ENCODE measurements at regions of chr1 and their contacts with region 1.

Region 1: DNA sequence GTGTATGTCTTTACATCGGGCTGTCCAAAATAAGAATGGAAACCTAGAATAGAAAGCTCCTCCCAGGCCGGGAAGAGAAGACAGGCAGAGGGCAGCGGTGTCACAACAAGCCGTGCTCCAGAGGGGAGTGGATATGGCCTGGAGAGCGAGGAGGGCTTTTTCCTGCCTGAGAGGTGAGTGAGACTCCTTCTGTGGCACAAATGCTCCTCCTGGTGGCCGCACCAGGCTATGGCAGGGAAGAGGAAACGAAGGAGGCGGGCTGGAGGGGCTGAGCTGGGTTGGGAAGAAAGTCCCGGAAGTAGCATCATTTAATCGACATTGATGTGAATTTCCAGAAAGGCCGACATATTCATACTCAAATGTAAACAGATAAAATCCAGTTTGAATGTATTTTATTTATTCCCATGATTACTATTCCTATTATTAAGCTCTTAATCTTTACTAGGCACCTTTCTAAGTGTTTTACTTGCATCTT is 54.7 kb downstream of the MEF2D start:
- DNase-seq: no peak
- ATAC-seq: peak; percentile 95
- H3K4me3 ChIP-seq: no peak overlapping the region
- H3K27ac ChIP-seq: no peak overlapping the region
- H3K4me1 ChIP-seq: no peaks in the 10 kb centered on the region
- H3K27me3 ChIP-seq: peaks cover 7 to 14% of the 10 kb centered on the region in 2 experiments
- CTCF ChIP-seq: peak; percentile 97 to 98 (median 98)
- EP300 ChIP-seq: no peak
- POLR2A ChIP-seq: no peak
- RAD21 ChIP-seq: peak; percentile 99

Region 2: GRCh38 chr1:155744711-155745283 is 701.0 kb before region 1 on chr1:
- CTCF ChIA-PET with region 1: no interaction called
- POLR2A ChIA-PET with region 1: no interaction called
- RAD21 ChIA-PET with region 1: no interaction called
- SMC1A ChIA-PET with region 1: no interaction called
- in situ Hi-C with region 1: no loop called
- intact Hi-C with region 1: no loop called
- DNase-seq: no peak
- ATAC-seq: no peak
- H3K4me3 ChIP-seq: peak overlapping the region; percentile 56
- H3K27ac ChIP-seq: peak overlapping the region; percentile 64
- H3K4me1 ChIP-seq: peaks cover 4% of the 10 kb centered on the region
- H3K27me3 ChIP-seq: no peaks in the 10 kb centered on the region
- CTCF ChIP-seq: no peak
- EP300 ChIP-seq: no peak
- POLR2A ChIP-seq: no peak
- RAD21 ChIP-seq: no peak

Region 3: DNA sequence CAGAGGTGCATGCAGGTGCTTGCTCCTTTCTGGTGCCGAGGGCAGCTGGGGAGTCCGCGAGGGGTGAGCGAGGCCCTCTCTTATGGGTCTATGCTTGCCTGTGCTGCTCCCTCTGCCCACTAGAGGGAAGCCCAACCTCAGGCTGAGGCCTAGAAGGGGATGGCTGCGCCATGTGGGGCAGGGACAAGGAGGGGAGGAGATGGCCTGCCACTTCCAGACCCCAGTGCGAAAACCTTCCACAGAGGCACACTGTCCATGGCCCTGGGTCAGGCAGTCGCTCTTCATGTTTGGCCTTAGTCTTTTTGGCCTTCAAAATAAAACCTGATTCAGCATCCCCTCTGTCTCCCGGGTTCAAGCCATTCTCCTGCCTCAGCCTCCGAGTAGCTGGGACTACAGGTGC is 62.8 kb before region 1 on chr1:
- CTCF ChIA-PET with region 1: interaction called, 468 read pairs
- POLR2A ChIA-PET with region 1: interaction called, 8 read pairs
- RAD21 ChIA-PET with region 1: interaction called, 162 read pairs
- SMC1A ChIA-PET with region 1: interaction called, 149 read pairs
- in situ Hi-C with region 1: loop called (anchors 5 kb)
- intact Hi-C with region 1: loop called (anchors 1 kb)
- DNase-seq: no peak
- ATAC-seq: peak; percentile 98
- H3K4me3 ChIP-seq: no peak overlapping the region
- H3K27ac ChIP-seq: no peak overlapping the region
- H3K4me1 ChIP-seq: no peaks in the 10 kb centered on the region
- H3K27me3 ChIP-seq: peaks cover 2 to 5% of the 10 kb centered on the region in 2 experiments
- CTCF ChIP-seq: peak; percentile 92 to 98 (median 93)
- EP300 ChIP-seq: no peak
- POLR2A ChIP-seq: no peak
- RAD21 ChIP-seq: peak; percentile 91

Region 4: DNA sequence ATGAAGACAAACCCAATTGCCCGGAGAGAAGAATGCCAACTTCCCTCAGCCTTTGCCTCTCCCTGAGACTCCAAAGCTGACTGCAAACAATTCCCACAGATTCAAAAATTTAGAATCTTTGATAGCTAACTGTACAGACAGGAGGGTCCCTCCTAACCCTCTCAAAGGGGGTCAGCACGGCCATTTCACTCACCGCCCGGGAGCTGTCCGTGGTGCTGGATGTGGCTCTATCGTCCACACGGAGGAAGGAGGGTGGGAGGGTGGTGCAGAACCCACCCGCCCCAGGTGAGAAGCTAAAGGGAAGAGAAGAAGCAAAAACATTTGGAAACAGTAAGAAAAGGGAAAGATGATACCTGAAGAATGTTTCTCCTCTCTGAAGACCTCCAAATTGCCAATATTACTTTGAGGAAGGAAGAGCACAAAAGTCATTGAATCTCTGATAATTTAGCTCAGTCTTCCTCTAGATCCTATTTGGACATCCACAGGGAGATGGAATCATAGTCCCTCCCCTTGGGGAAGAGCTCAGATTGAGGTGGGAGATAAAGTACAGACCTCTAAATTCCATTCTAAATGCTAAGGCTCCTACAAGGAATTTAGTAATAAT is 31.3 kb before region 1 on chr1:
- CTCF ChIA-PET with region 1: interaction called, 26 read pairs
- POLR2A ChIA-PET with region 1: no interaction called
- RAD21 ChIA-PET with region 1: interaction called, 13 read pairs
- SMC1A ChIA-PET with region 1: interaction called, 16 read pairs
- in situ Hi-C with region 1: no loop called
- intact Hi-C with region 1: no loop called
- DNase-seq: no peak
- ATAC-seq: no peak
- H3K4me3 ChIP-seq: no peak overlapping the region
- H3K27ac ChIP-seq: no peak overlapping the region
- H3K4me1 ChIP-seq: no peaks in the 10 kb centered on the region
- H3K27me3 ChIP-seq: no peaks in the 10 kb centered on the region; a peak in 1 of 4 replicates
- CTCF ChIP-seq: no peak
- EP300 ChIP-seq: no peak
- POLR2A ChIP-seq: no peak
- RAD21 ChIP-seq: no peak

Region 5: DNA sequence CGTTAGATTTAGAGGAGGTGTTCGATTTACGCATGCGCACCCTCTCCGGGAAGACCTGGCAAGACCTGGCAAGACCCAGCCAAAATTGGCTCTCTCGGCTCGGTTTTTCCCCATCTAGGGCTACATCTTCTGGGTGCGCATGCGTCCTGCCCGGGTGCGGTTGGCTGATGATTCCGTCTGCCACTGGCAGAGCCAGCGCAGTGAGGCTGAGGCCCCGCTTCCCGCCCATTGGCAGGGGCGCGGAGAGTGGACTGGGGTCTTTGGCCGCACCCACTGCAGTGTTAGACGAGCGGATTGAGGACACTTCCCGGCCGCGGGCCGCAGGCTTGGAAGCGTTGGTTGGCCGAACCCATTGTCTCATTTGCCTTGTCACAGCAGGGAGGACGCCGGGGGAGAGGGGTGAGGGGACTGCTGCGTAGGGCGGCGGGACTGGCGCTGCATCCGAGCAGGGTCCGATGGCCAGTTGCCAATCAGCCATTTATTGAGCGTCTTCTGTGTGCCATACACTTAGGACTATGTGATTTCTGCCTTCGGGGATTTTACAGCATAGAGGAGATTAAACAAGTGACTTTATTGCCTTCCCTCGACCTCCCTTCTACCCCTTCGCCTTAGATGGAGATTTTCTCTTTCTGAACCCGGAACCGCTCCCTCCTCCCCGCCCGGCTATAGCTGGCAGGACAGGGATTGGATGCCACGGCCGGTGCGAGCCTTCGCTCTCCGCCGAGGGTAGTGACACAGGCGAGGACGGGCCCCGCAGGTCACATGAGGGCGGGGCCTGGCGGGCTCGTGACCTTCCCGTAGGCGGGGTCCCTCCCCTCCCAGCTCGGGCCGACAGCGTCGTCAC is 11.0 kb after region 1 on chr1:
- CTCF ChIA-PET with region 1: interaction called, 17 read pairs
- POLR2A ChIA-PET with region 1: interaction called, 3 read pairs
- RAD21 ChIA-PET with region 1: interaction called, 8 read pairs
- SMC1A ChIA-PET with region 1: interaction called, 14 read pairs
- in situ Hi-C with region 1: no loop called
- intact Hi-C with region 1: no loop called
- DNase-seq: peak; percentile 92
- ATAC-seq: peak; percentile 95
- H3K4me3 ChIP-seq: peak overlapping the region; percentile 34; the same call in 1 of the 2 replicates
- H3K27ac ChIP-seq: peak overlapping the region; percentile 87
- H3K4me1 ChIP-seq: peaks cover 8% of the 10 kb centered on the region
- H3K27me3 ChIP-seq: no peaks in the 10 kb centered on the region; a peak in 2 of 4 replicates
- CTCF ChIP-seq: no peak
- EP300 ChIP-seq: no peak; a peak in 1 of 4 replicates
- POLR2A ChIP-seq: peak; percentile 82
- RAD21 ChIP-seq: no peak

Region 6: DNA sequence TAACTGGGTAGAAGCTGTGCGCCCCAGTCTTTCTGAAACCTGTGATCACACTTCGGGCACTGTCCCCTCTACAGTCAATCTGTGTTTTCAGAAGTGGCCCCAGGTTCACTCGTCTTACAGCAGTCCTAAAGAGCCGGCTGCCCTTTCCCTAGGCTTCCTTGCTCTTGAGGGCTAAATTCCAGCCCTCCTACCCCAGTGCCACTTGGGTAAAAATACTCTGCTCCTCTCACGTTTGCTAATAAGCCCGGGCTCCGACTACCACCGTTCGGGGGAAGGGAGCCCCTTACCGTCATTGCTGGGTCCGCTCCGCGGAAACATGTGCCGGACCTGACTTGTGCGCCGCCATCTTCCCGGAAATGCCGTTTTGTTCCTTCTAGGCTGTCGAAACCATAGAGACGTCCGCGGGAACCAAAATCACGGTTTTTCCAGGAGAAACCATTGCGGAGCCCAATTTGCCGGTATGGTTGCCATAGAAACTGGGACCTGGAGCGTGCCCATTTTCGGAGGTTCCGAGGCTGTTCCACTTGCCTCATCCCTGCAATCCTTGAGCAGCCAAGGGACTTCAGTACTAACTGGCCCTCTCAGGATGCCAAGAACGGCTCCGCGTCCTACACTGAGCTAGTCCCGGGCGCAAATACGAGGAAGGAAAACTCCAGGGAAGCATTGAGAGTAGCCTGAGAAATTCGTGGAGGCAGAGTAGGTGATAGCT is 155.4 kb after region 1 on chr1 and contains the start of gene GPATCH4:
- CTCF ChIA-PET with region 1: interaction called, 11 read pairs
- POLR2A ChIA-PET with region 1: interaction called, 5 read pairs
- RAD21 ChIA-PET with region 1: interaction called, 3 read pairs
- SMC1A ChIA-PET with region 1: interaction called, 4 read pairs
- in situ Hi-C with region 1: loop called (anchors 10 kb)
- intact Hi-C with region 1: no loop called
- DNase-seq: no peak
- ATAC-seq: peak; percentile 80
- H3K4me3 ChIP-seq: peak within 1 kb of the TSS; percentile 82
- H3K27ac ChIP-seq: peak within 1 kb of the TSS; percentile 93
- H3K4me1 ChIP-seq: peaks cover 9% of the 10 kb centered on the region
- H3K27me3 ChIP-seq: no peaks in the 10 kb centered on the region
- CTCF ChIP-seq: no peak
- EP300 ChIP-seq: 0 out of 4 replicates have a peak, but pooled peaks of 1 of the 2 experiments have one; percentile 13
- POLR2A ChIP-seq: peak; percentile 92
- RAD21 ChIP-seq: no peak
- polyA plus RNA-seq, gene GPATCH4: 82.5 to 90.4 TPM